Activated CD4-positive, alpha-beta T cell treated with anti-CD3 and anti-CD28 coated beads, Interleukin-2, amount 10 ng/mL, durations not matched to agents 24 days and 14 days (primary cell): ENCODE measurements at regions of chr4 and their contacts with region 1.

Region 1: DNA sequence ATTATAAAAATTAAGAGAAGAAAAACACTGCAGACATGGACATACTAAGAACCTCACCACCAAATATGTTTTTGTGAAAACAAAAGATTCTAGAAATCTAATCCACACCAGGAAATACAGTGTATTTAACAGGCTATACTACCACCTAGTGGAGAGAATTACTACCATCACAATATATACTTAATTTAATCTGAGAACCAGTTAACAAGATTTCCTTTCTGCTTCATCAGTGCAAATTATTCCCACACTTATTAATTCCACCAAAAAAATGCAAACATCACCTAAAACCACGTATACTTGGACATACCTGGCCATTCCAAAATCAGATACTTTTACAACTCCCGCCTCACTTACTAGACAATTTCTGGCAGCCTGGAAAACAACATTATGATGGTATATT is 7.0 kb upstream of the TXK start:
- DNase-seq: peak; percentile 48
- H3K4me3 Mint-ChIP-seq: no peak overlapping the region
- H3K27ac Mint-ChIP-seq: no peak overlapping the region
- H3K4me1 Mint-ChIP-seq: peaks cover 44% of the 10 kb centered on the region
- H3K27me3 Mint-ChIP-seq: no peaks in the 10 kb centered on the region

Region 2: DNA sequence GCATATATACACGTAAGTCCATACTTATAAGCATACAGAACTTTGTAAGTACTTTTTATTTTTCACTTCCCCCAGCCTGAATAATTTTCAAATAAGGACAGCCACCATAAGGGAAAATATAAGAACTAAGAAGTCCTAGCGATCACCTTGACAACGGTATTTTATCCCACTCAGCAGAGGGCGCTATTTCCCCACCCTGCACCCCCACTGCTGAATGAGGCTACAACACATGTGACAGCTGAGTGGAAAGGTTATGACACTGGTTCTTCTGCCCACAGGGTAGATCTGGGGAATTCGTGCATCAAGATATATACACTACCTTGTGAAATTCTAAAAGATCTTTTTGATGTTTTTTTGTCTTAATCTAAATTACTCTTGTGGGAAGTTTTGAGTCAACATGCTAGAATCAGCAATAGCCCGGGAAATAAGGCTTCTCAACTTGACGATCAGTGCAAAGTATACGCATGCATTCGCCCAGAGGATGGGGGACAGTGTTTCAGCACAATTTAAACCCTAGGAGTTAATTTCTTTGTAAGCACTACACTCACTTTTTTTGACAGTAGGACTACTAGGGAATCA is 454.7 kb before region 1 on chr4:
- intact Hi-C with region 1: loop called (anchors 5 kb)
- DNase-seq: peak; percentile 88
- H3K4me3 Mint-ChIP-seq: no peak overlapping the region
- H3K27ac Mint-ChIP-seq: no peak overlapping the region
- H3K4me1 Mint-ChIP-seq: peaks cover 3% of the 10 kb centered on the region
- H3K27me3 Mint-ChIP-seq: peaks cover 17% of the 10 kb centered on the region

Region 3: GRCh38 chr4:48002267-48002666 is 138.8 kb before region 1 on chr4:
- intact Hi-C with region 1: loop called (anchors 2 kb)
- DNase-seq: no peak
- H3K4me3 Mint-ChIP-seq: no peak overlapping the region
- H3K27ac Mint-ChIP-seq: no peak overlapping the region
- H3K4me1 Mint-ChIP-seq: no peaks in the 10 kb centered on the region
- H3K27me3 Mint-ChIP-seq: peaks cover 6% of the 10 kb centered on the region

Region 4: GRCh38 chr4:48162162-48162561 is 21.1 kb after region 1 on chr4:
- intact Hi-C with region 1: loop called (anchors 2 kb)
- DNase-seq: no peak
- H3K4me3 Mint-ChIP-seq: no peak overlapping the region
- H3K27ac Mint-ChIP-seq: no peak overlapping the region
- H3K4me1 Mint-ChIP-seq: peaks cover 11% of the 10 kb centered on the region
- H3K27me3 Mint-ChIP-seq: no peaks in the 10 kb centered on the region